ENCODE measurements at regions of chr2 and their contacts with region 1.

Region 1: GRCh38 chr2:44044281-44044720 is 48.5 kb upstream of the LRPPRC start:
- DNase-seq: peak; percentile 77
- ATAC-seq: peak; percentile 100
- H3K4me3 ChIP-seq: no peak overlapping the region
- H3K27ac ChIP-seq: peak overlapping the region; percentile 7; the same call in 1 of the 2 replicates
- H3K4me1 ChIP-seq: peaks cover 0 to 7% of the 10 kb centered on the region in 2 experiments; a peak in 3 of 4 replicates
- H3K27me3 ChIP-seq: no peaks in the 10 kb centered on the region
- CTCF ChIP-seq: peak; percentile 83 to 98 (median 98)
- POLR2A ChIP-seq: no peak
- RAD21 ChIP-seq: peak; percentile 95

Region 2: GRCh38 chr2:44055229-44055628 is 10.9 kb after region 1 on chr2:
- CTCF ChIA-PET with region 1: interaction called, 14 read pairs
- POLR2A ChIA-PET with region 1: interaction called, 3 read pairs
- RAD21 ChIA-PET with region 1: no interaction called
- intact Hi-C with region 1: no loop called
- DNase-seq: no peak
- ATAC-seq: no peak
- H3K4me3 ChIP-seq: no peak overlapping the region
- H3K27ac ChIP-seq: no peak overlapping the region
- H3K4me1 ChIP-seq: no peaks in the 10 kb centered on the region
- H3K27me3 ChIP-seq: no peaks in the 10 kb centered on the region
- CTCF ChIP-seq: no peak
- POLR2A ChIP-seq: no peak
- RAD21 ChIP-seq: 0 out of 2 replicates have a peak, but pooled peaks have one; percentile 5

Region 3: GRCh38 chr2:44291281-44292248 is 247.3 kb after region 1 on chr2:
- CTCF ChIA-PET with region 1: interaction called, 8 read pairs
- POLR2A ChIA-PET with region 1: no interaction called
- RAD21 ChIA-PET with region 1: interaction called in 1 of 2 experiments, 6 read pairs
- intact Hi-C with region 1: loop called (anchors 1 kb)
- DNase-seq: peak; percentile 48
- ATAC-seq: peak; percentile 96
- H3K4me3 ChIP-seq: no peak overlapping the region
- H3K27ac ChIP-seq: no peak overlapping the region
- H3K4me1 ChIP-seq: peaks cover 10 to 17% of the 10 kb centered on the region in 2 experiments
- H3K27me3 ChIP-seq: no peaks in the 10 kb centered on the region
- CTCF ChIP-seq: peak; percentile 65 to 88 (median 69)
- POLR2A ChIP-seq: no peak
- RAD21 ChIP-seq: peak; percentile 90

Region 4: GRCh38 chr2:44342854-44343253 is 298.6 kb after region 1 on chr2:
- CTCF ChIA-PET with region 1: interaction called, 6 read pairs
- POLR2A ChIA-PET with region 1: no interaction called
- RAD21 ChIA-PET with region 1: no interaction called
- intact Hi-C with region 1: loop called (anchors 1 kb)
- DNase-seq: no peak
- ATAC-seq: peak; percentile 77
- H3K4me3 ChIP-seq: no peak overlapping the region
- H3K27ac ChIP-seq: no peak overlapping the region
- H3K4me1 ChIP-seq: no peaks in the 10 kb centered on the region
- H3K27me3 ChIP-seq: no peaks in the 10 kb centered on the region
- CTCF ChIP-seq: peak; percentile 24 to 62 (median 33); a peak in 3 of 6 replicates
- POLR2A ChIP-seq: no peak
- RAD21 ChIP-seq: peak; percentile 51

Region 5: GRCh38 chr2:44392338-44392943 is 348.1 kb after region 1 on chr2:
- CTCF ChIA-PET with region 1: interaction called, 12 read pairs
- POLR2A ChIA-PET with region 1: no interaction called
- RAD21 ChIA-PET with region 1: no interaction called
- intact Hi-C with region 1: no loop called
- DNase-seq: peak; percentile 6
- ATAC-seq: no peak
- H3K4me3 ChIP-seq: no peak overlapping the region
- H3K27ac ChIP-seq: no peak overlapping the region
- H3K4me1 ChIP-seq: no peaks in the 10 kb centered on the region
- H3K27me3 ChIP-seq: no peaks in the 10 kb centered on the region
- CTCF ChIP-seq: peak; percentile 56 to 79 (median 62)
- POLR2A ChIP-seq: no peak
- RAD21 ChIP-seq: peak; percentile 57